ENCODE measurements at regions of chr5 and their contacts with region 1.

Region 1: GRCh38 chr5:172179361-172179989 is 8.5 kb downstream of the STK10 start:
- DNase-seq: peak in 8 of 9 experiments; percentile 36 to 86 (median 58)
- ATAC-seq: peak; percentile 9
- H3K4me3 ChIP-seq: peak overlapping the region; percentile 49 to 51
- H3K4me3 Mint-ChIP-seq: peak overlapping the region; percentile 80
- H3K27ac ChIP-seq: peak overlapping the region; percentile 92 to 97
- H3K27ac Mint-ChIP-seq: peak overlapping the region; percentile 97
- H3K4me1 ChIP-seq: peaks cover 90% of the 10 kb centered on the region
- H3K4me1 Mint-ChIP-seq: peaks cover 89% of the 10 kb centered on the region
- H3K27me3 ChIP-seq: no peaks in the 10 kb centered on the region
- H3K27me3 Mint-ChIP-seq: no peaks in the 10 kb centered on the region
- CTCF ChIP-seq: no peak

Region 2: DNA sequence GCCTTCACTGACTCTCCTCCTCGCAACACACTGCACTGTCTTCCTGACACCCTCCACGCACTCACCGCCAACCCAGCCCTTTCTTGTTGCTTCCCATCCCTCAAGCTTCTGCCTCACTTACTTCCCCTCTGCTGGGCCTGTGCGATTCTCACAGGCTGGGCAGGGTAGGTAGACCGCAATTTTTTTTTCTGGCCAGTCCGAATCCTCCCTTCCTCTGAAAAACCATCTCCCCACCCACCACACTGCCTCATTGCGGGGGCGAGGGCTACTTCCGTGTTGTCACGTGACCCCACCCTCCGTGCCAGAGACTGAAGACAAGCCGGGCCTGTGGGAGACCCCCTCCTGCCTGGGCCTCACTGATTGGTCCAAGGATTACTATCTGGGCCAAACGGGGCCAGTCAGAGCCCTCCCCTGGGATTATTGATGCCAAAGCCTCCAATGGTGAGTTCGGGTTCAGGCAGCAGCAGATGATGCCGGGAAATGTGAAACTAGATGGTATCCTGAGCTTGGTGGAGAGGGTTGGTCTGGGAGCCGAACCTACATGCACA is 64.5 kb before region 1 on chr5:
- CTCF ChIA-PET with region 1: interaction called, 197 read pairs
- POLR2A ChIA-PET with region 1: interaction called, 82 read pairs
- intact Hi-C with region 1: loop called in 1 of 2 experiments (anchors 1 kb)
- DNase-seq: peak; percentile 37 to 91 (median 67)
- ATAC-seq: peak; percentile 35
- H3K4me3 ChIP-seq: peak overlapping the region; percentile 13 to 30
- H3K4me3 Mint-ChIP-seq: peak overlapping the region; percentile 77
- H3K27ac ChIP-seq: peak overlapping the region; percentile 45 to 83
- H3K27ac Mint-ChIP-seq: peak overlapping the region; percentile 97
- H3K4me1 ChIP-seq: peaks cover 89% of the 10 kb centered on the region
- H3K4me1 Mint-ChIP-seq: peaks cover 83% of the 10 kb centered on the region
- H3K27me3 ChIP-seq: no peaks in the 10 kb centered on the region
- H3K27me3 Mint-ChIP-seq: no peaks in the 10 kb centered on the region
- CTCF ChIP-seq: no peak

Region 3: GRCh38 chr5:172144291-172144815 is 35.1 kb before region 1 on chr5:
- CTCF ChIA-PET with region 1: no interaction called
- POLR2A ChIA-PET with region 1: interaction called, 6 read pairs
- intact Hi-C with region 1: loop called in 1 of 2 experiments (anchors 5 kb)
- DNase-seq: no peak
- ATAC-seq: no peak
- H3K4me3 ChIP-seq: no peak overlapping the region
- H3K4me3 Mint-ChIP-seq: no peak overlapping the region
- H3K27ac ChIP-seq: peak overlapping the region in 1 of 2 experiments; percentile 47
- H3K27ac Mint-ChIP-seq: peak overlapping the region; percentile 90
- H3K4me1 ChIP-seq: peaks cover 90% of the 10 kb centered on the region
- H3K4me1 Mint-ChIP-seq: peaks cover 93% of the 10 kb centered on the region
- H3K27me3 ChIP-seq: no peaks in the 10 kb centered on the region
- H3K27me3 Mint-ChIP-seq: no peaks in the 10 kb centered on the region
- CTCF ChIP-seq: no peak

Region 4: GRCh38 chr5:172162323-172162986 is 17.0 kb before region 1 on chr5:
- CTCF ChIA-PET with region 1: interaction called, 18 read pairs
- POLR2A ChIA-PET with region 1: interaction called, 11 read pairs
- intact Hi-C with region 1: no loop called
- DNase-seq: no peak
- ATAC-seq: no peak
- H3K4me3 ChIP-seq: no peak overlapping the region
- H3K4me3 Mint-ChIP-seq: no peak overlapping the region
- H3K27ac ChIP-seq: peak overlapping the region in 1 of 2 experiments; percentile 54
- H3K27ac Mint-ChIP-seq: peak overlapping the region; percentile 76
- H3K4me1 ChIP-seq: peaks cover 83% of the 10 kb centered on the region
- H3K4me1 Mint-ChIP-seq: peaks cover 76% of the 10 kb centered on the region
- H3K27me3 ChIP-seq: no peaks in the 10 kb centered on the region
- H3K27me3 Mint-ChIP-seq: no peaks in the 10 kb centered on the region
- CTCF ChIP-seq: no peak

Region 5: DNA sequence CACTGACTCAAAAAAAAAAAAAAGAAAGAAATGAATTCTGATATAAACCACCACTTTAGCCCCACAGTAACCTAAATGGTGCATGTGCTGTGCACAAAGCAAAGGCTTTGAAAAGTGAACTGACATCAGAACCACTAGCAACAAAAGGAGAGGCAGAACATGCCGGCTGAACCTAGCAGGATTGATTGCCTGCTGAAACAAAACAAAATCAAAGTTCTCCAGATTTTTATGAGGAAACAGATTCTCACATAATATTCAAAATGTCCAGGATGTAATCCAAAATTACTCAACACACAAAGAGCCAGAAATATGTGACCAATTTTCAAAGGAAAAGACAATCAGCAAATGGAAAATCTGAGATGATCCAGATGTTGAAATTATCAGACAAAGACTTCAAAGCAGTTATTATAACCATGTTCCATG is 66.2 kb after region 1 on chr5:
- CTCF ChIA-PET with region 1: no interaction called
- POLR2A ChIA-PET with region 1: no interaction called
- intact Hi-C with region 1: no loop called
- DNase-seq: no peak
- ATAC-seq: no peak
- H3K4me3 ChIP-seq: no peak overlapping the region
- H3K4me3 Mint-ChIP-seq: no peak overlapping the region
- H3K27ac ChIP-seq: no peak overlapping the region
- H3K27ac Mint-ChIP-seq: no peak overlapping the region
- H3K4me1 ChIP-seq: no peaks in the 10 kb centered on the region
- H3K4me1 Mint-ChIP-seq: no peaks in the 10 kb centered on the region
- H3K27me3 ChIP-seq: no peaks in the 10 kb centered on the region
- H3K27me3 Mint-ChIP-seq: no peaks in the 10 kb centered on the region
- CTCF ChIP-seq: no peak

Region 6: DNA sequence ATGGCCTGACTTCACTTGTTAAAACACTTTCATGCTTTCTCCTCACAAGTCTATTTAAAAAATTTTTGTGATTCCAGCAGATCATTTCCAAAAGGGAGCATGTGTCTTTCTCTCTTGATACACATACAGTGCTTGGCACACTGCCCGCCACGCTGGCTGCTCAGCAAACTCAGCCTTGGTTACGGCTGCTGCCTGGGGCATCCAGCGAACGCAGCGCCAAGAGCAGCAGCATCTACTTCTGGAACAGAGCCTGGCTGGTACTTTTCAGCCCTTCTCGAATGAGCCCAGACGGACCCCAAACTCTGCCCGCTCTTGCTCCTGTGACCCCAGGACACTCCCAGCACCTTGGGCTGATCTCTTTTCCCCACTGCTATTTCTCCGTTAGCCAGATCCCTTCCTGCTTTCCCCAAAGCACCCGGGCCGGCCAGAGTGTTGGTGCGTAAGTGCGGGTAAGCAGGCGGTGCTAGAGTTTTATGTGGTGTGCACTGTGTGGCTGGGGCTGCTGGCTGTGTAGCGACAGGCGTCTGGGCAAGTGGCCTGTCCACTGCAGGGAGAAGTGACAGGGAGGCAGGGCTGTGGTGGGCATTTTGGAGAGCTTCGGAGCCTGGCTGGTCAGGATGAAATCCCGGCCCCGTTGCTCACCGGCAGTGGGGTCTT is 201.6 kb after region 1 on chr5:
- CTCF ChIA-PET with region 1: no interaction called
- POLR2A ChIA-PET with region 1: no interaction called
- intact Hi-C with region 1: no loop called
- DNase-seq: no peak
- ATAC-seq: no peak
- H3K4me3 ChIP-seq: no peak overlapping the region
- H3K4me3 Mint-ChIP-seq: no peak overlapping the region
- H3K27ac ChIP-seq: no peak overlapping the region
- H3K27ac Mint-ChIP-seq: no peak overlapping the region
- H3K4me1 ChIP-seq: no peaks in the 10 kb centered on the region
- H3K4me1 Mint-ChIP-seq: no peaks in the 10 kb centered on the region
- H3K27me3 ChIP-seq: no peaks in the 10 kb centered on the region
- H3K27me3 Mint-ChIP-seq: no peaks in the 10 kb centered on the region
- CTCF ChIP-seq: no peak